ENCODE measurements at regions of chr16 and their contacts with region 1.

Region 1: GRCh38 chr16:66844342-66845079 is at the start of gene CA7:
- DNase-seq: peak in 2 of 7 donors; percentile 13 to 30
- H3K4me3 ChIP-seq: peak within 1 kb of the TSS in 2 of 4 donors; percentile 22 to 52
- H3K27ac ChIP-seq: no peak within 1 kb of the TSS
- H3K4me1 ChIP-seq: peaks cover 8 to 11% of the 10 kb centered on the region in 2 donors
- H3K27me3 ChIP-seq: peaks cover 22% of the 10 kb centered on the region
- CTCF ChIP-seq: no peak
- POLR2A ChIP-seq: no peak
- total RNA-seq, gene CA7: not detected

Region 2: DNA sequence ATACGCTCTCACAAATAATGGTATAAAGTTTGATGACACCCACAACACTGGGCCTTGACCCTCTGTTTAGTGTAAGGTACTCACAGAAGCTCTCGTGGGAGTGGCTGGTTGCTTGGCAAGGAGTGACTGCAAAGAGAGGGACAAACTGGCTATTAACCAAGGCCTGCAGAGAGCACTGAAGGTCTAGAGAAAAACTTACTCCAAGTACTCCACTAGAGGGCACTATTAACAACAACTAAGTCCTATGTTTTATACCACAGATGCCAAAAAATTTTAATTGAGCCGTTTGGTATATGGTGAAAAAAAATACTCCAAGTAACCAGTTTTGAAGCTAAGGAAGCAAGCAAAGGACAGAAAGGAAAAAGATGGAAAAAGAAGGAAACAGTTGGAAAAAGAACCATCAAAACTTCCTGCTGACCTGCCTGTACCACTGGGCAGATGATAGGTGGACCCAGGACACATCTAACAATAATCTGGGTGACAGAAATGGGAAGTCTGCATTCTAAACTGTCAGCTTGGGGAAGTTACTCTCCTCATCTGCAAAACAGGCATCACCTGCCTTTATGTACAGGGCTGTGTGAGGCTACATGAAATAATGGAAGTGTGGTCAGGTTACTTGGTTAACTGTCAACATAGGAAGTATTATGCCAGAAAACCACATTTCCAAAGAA is 116.3 kb before region 1 on chr16:
- intact Hi-C with region 1: loop called in 1 of 2 experiments (anchors 10 kb)
- DNase-seq: peak; percentile 50 to 79 (median 63)
- H3K4me3 ChIP-seq: no peak overlapping the region
- H3K27ac ChIP-seq: peak overlapping the region in 1 of 5 donors; percentile 9
- H3K4me1 ChIP-seq: peaks cover 0 to 4% of the 10 kb centered on the region in 2 donors
- H3K27me3 ChIP-seq: no peaks in the 10 kb centered on the region
- CTCF ChIP-seq: peak; percentile 60 to 81 (median 65)
- POLR2A ChIP-seq: no peak

Region 3: GRCh38 chr16:66758086-66758485 is 86.4 kb before region 1 on chr16:
- intact Hi-C with region 1: no loop called
- DNase-seq: no peak
- H3K4me3 ChIP-seq: no peak overlapping the region
- H3K27ac ChIP-seq: no peak overlapping the region
- H3K4me1 ChIP-seq: no peaks in the 10 kb centered on the region
- H3K27me3 ChIP-seq: no peaks in the 10 kb centered on the region
- CTCF ChIP-seq: no peak
- POLR2A ChIP-seq: no peak